Activated CD8-positive, alpha-beta T cell treated with anti-CD3 and anti-CD28 coated beads, Interleukin-2, amount 10 ng/mL, durations not matched to agents 7 days and 5 days (primary cell): ENCODE measurements at regions of chr12 and their contacts with region 1.

Region 1: DNA sequence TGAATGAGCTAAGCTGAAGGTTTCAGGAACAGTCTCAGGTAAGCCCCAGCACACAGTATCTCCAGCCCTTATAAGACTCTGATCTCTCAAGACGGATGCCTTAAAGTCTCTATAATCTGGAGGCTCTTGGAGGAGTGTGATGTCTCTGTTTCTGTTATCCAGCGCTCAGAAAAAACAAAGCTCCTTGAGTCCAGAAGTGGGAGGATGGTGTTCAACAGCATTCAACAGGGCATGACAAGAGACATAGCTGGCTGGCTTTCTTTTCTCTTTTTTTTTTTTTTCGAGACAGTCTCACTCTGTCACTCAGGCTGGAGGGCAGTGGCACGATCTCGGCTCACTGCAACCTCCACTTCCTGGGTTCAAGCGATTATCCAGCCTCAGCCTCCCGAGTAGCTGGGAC is 31.6 kb upstream of the TESC start:
- DNase-seq: no peak
- ATAC-seq: no peak
- H3K4me3 Mint-ChIP-seq: no peak overlapping the region
- H3K27ac Mint-ChIP-seq: no peak overlapping the region
- H3K4me1 Mint-ChIP-seq: peaks cover 22% of the 10 kb centered on the region
- H3K27me3 Mint-ChIP-seq: no peaks in the 10 kb centered on the region

Region 2: GRCh38 chr12:117025481-117026151 is 105.2 kb before region 1 on chr12:
- CTCF ChIA-PET with region 1: interaction called, 20 read pairs
- POLR2A ChIA-PET with region 1: no interaction called
- DNase-seq: peak; percentile 67
- ATAC-seq: peak; percentile 84
- H3K4me3 Mint-ChIP-seq: no peak overlapping the region
- H3K27ac Mint-ChIP-seq: peak overlapping the region; percentile 87
- H3K4me1 Mint-ChIP-seq: peaks cover 11% of the 10 kb centered on the region
- H3K27me3 Mint-ChIP-seq: no peaks in the 10 kb centered on the region

Region 3: DNA sequence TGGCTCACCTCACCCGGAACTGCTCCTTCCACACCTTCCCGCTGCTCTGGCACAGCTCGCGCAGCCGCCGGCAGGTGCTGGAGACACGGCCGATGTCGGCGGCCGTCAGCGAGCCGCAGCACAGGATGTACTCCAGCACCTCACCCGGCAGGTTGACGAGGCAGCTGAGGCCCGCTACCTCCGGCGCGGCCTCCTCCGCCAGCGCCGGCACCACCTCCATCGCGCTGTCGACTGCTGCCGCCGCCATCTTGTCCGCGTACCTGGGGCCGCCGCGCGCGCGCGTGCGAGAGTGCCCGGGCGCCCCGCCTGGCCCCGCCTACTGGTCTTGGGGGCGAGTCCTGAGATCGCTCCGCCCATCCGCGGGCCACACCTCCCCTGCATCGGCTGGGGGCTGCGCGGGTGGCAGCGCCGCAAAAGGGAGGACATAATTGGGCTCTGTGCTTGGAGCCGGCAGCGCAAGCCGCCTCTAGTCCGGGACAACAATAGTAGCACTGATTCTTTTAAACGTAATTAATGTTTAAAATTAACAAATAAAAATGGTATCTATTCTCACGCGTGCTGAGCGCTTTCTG is 59.5 kb after region 1 on chr12 and contains the start of gene FBXO21:
- CTCF ChIA-PET with region 1: no interaction called
- POLR2A ChIA-PET with region 1: no interaction called
- DNase-seq: peak; percentile 93
- ATAC-seq: peak; percentile 92
- H3K4me3 Mint-ChIP-seq: peak within 1 kb of the TSS; percentile 88
- H3K27ac Mint-ChIP-seq: peak within 1 kb of the TSS; percentile 89
- H3K4me1 Mint-ChIP-seq: peaks cover 25% of the 10 kb centered on the region
- H3K27me3 Mint-ChIP-seq: peaks cover 15% of the 10 kb centered on the region
- total RNA-seq, gene FBXO21: 26.3 to 29.6 TPM